ENCODE measurements at regions of chr17 and their contacts with region 1.

Region 1: GRCh38 chr17:8745586-8746500 is 1.2 kb upstream of the CCDC42 start:
- DNase-seq: peak; percentile 68 to 85
- ATAC-seq: peak; percentile 85 to 95
- H3K4me3 ChIP-seq: peak overlapping the region; percentile 54
- H3K27ac ChIP-seq: peak overlapping the region; percentile 12 to 69; a peak in 5 of 6 replicates
- H3K4me1 ChIP-seq: no peaks in the 10 kb centered on the region; the same call in 2 of the 3 replicates
- CTCF ChIP-seq: peak; percentile 99
- EP300 ChIP-seq: no peak
- POLR2A ChIP-seq: no peak
- RAD21 ChIP-seq: peak; percentile 85 to 100

Region 2: GRCh38 chr17:8383143-8383822 is 362.6 kb before region 1 on chr17 and contains the start of gene RPL26:
- CTCF ChIA-PET with region 1: interaction called, 82 read pairs
- POLR2A ChIA-PET with region 1: interaction called, 12 read pairs
- DNase-seq: peak; percentile 97 to 99
- ATAC-seq: peak; percentile 91 to 93
- H3K4me3 ChIP-seq: peak within 1 kb of the TSS; percentile 97
- H3K27ac ChIP-seq: peak within 1 kb of the TSS; percentile 93 to 99
- H3K4me1 ChIP-seq: peaks cover 44% of the 10 kb centered on the region
- CTCF ChIP-seq: peak; percentile 99
- EP300 ChIP-seq: no peak
- POLR2A ChIP-seq: peak; percentile 98
- RAD21 ChIP-seq: peak; percentile 26 to 86
- polyA plus RNA-seq, gene RPL26: 6,286 and 7,141 TPM in 2 replicates

Region 3: DNA sequence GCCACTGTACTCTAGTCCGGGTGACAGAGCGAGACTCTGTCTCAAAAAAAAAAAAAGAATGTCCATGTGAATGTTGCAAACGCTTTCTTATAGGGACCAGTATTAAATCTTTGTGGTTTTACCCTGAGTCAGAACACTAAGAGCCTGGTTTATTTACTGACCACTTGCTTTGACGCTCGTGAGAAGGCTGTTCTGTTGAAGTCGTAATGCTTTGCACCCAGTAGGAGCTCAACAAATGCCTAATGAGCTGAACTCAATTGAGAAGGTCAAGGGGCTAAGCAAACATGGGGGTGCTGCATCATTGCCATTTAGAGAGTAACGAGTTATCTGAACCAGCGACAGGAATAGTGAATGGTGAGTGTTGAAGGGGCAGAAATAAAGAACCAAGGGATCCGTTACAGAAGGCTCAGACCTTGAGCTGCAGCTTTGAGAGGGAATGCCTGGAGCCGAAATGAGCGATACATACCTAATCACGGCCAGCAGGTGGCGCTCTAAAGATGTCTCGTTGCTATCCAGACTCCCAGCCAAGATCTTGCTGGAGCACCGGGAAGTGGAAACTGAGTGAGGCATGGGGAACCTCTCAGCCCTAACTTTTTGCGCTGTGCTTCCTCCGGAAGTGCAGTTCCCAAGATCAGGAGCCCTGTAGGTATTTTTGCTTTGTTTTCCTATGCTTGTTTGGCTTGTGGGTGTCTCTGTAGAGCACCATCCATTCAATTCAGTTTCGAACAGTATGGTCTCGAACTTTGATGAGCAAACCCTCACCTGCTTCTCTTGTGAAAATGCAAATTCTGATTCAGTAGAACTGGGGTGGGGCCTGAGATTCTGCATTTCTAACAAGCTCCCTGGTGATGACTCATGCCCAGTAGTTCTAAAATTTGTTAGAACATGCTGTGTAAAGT is 335.6 kb before region 1 on chr17:
- CTCF ChIA-PET with region 1: interaction called, 112 read pairs
- POLR2A ChIA-PET with region 1: no interaction called
- DNase-seq: peak; percentile 79 to 91
- ATAC-seq: peak; percentile 91 to 97
- H3K4me3 ChIP-seq: no peak overlapping the region
- H3K27ac ChIP-seq: no peak overlapping the region
- H3K4me1 ChIP-seq: peaks cover 6% of the 10 kb centered on the region; the same call in 2 of the 3 replicates
- CTCF ChIP-seq: peak; percentile 96
- EP300 ChIP-seq: no peak
- POLR2A ChIP-seq: no peak
- RAD21 ChIP-seq: peak; percentile 90

Region 4: DNA sequence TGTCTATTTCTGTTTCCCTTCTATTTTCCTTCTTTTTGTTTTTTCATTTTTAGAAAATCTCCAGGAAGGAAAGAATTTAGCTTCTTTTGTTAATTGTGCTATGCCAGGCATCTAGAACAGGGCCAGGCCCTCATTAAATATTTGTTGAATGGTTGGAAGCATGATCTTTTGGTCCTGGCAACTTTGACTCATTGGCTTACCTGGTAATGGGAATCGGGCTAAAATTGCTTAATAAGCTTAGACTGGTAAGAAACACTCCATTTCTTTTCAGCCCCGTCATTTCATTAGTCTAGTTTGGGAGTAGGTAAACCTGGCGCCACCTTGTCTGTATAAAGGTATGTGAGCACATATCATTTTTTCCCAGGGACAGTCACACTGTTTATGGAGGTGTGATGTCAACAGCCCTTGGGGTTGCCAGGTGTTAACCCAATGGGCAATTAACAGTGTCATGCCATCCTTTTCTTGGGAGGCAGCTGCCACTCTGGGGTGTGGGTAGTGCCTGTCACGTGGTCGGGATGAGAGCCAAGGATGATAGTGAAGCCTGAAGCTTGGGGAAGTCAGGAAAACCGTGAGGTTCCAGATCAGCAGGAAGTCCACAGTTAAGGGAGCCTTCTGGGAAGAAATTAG is 319.6 kb before region 1 on chr17:
- CTCF ChIA-PET with region 1: interaction called, 27 read pairs
- POLR2A ChIA-PET with region 1: no interaction called
- DNase-seq: no peak
- ATAC-seq: no peak
- H3K4me3 ChIP-seq: no peak overlapping the region
- H3K27ac ChIP-seq: no peak overlapping the region
- H3K4me1 ChIP-seq: peaks cover 7% of the 10 kb centered on the region; the same call in 2 of the 3 replicates
- CTCF ChIP-seq: no peak
- EP300 ChIP-seq: no peak
- POLR2A ChIP-seq: no peak
- RAD21 ChIP-seq: no peak

Region 5: GRCh38 chr17:8572764-8573163 is 173.1 kb before region 1 on chr17:
- CTCF ChIA-PET with region 1: interaction called, 13 read pairs
- POLR2A ChIA-PET with region 1: no interaction called
- DNase-seq: no peak
- ATAC-seq: no peak
- H3K4me3 ChIP-seq: no peak overlapping the region
- H3K27ac ChIP-seq: no peak overlapping the region
- H3K4me1 ChIP-seq: no peaks in the 10 kb centered on the region
- CTCF ChIP-seq: peak; percentile 22; the same call in 1 of the 3 replicates
- EP300 ChIP-seq: no peak
- POLR2A ChIP-seq: no peak
- RAD21 ChIP-seq: peak; percentile 43 to 48; a peak in 3 of 5 replicates

Region 6: DNA sequence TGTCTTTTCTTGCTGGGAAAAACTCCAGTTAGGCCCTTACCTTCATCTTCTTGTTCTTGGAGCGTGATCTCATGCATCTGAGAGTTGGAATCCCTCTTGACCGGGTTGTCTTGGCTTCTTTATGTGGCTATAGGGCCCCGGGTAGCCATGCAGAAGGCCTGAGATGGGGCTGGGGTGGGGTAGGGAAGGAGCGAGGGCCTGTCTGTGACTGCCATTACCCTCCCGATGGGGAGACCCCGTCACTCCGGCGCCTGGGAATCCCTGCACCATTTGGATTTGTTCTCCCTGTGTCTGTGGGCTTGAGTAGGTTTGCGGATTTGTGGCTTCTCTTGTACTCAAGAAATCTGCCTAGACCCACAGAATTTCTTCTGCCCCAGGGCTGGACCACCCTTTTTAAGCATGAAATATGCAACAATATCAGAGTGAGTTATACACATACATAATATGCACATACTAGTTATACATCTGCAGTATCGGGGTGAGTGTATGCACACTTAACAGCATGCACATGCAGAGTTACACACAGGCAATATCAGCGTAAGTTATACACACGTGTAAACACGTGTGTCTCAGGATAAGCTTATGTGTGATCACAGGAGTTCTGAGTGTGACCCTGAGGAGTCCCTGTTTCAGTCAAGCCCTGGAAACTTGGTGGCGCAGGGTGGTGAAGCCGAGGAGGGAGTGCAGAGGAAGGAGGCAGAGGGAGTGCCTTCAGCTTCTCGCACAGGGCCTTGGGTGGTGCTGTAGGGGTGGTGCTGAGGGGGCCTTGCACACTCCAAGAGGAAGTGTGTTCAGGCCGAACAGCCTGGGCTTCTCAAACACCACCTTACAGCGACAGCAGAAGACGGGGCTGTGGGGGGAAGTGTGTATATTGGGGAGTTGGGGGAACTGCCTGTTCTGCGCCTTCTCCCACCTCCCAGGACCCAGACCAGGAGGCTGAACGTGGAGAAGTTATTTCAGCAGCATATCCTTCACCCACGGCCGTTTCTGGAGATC is 19.7 kb before region 1 on chr17:
- CTCF ChIA-PET with region 1: interaction called, 31 read pairs
- POLR2A ChIA-PET with region 1: no interaction called
- DNase-seq: no peak
- ATAC-seq: peak in 1 of 2 experiments; percentile 28; a peak in 2 of 6 replicates
- H3K4me3 ChIP-seq: no peak overlapping the region
- H3K27ac ChIP-seq: no peak overlapping the region
- H3K4me1 ChIP-seq: no peaks in the 10 kb centered on the region
- CTCF ChIP-seq: no peak
- EP300 ChIP-seq: no peak
- POLR2A ChIP-seq: no peak
- RAD21 ChIP-seq: no peak

Region 7: GRCh38 chr17:8766731-8767130 is 20.9 kb after region 1 on chr17:
- CTCF ChIA-PET with region 1: interaction called, 23 read pairs
- POLR2A ChIA-PET with region 1: no interaction called
- DNase-seq: no peak
- ATAC-seq: no peak
- H3K4me3 ChIP-seq: no peak overlapping the region
- H3K27ac ChIP-seq: no peak overlapping the region
- H3K4me1 ChIP-seq: no peaks in the 10 kb centered on the region
- CTCF ChIP-seq: no peak
- EP300 ChIP-seq: no peak
- POLR2A ChIP-seq: no peak
- RAD21 ChIP-seq: no peak

Measured in A549 (cell line).